ENCODE measurements at regions of chr17 and their contacts with region 1.

Region 1: GRCh38 chr17:59634632-59635541 is 15.2 kb downstream of the CLTC start:
- DNase-seq: no peak
- H3K4me3 ChIP-seq: no peak overlapping the region
- H3K27ac ChIP-seq: no peak overlapping the region
- H3K27me3 ChIP-seq: no peaks in the 10 kb centered on the region
- CTCF ChIP-seq: no peak

Region 2: DNA sequence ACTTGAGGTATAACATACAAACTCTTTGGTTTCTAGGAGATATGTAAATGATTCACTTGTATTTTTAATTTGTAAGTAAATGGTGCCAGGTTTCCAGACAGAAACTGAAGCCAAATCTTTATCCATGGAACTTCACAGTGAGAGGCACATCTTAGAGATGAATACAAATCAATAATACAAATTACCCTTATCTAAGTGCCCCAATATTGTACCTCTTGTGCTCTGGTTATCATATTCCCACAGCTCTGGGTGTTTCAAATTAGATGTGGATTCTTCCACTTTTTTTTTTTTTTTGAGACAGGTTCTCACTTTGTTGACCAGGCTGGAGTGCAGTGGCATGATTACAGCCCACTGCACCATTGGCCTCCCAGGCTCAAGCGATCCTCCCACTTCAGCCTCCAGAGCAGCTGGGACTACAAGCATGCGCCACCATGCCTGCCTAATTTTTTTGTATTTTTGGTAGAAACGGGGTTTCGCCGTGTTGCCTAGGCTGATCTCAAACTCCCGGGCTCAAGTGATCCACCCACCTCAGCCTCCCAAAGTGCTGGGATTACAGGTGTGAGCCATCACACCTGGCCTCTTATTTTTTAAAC is 107.5 kb before region 1 on chr17:
- CTCF ChIA-PET with region 1: no interaction called
- POLR2A ChIA-PET with region 1: no interaction called
- DNase-seq: no peak
- H3K4me3 ChIP-seq: no peak overlapping the region
- H3K27ac ChIP-seq: no peak overlapping the region
- H3K27me3 ChIP-seq: peaks cover 13% of the 10 kb centered on the region
- CTCF ChIP-seq: no peak

Region 3: GRCh38 chr17:59565171-59565969 is 69.5 kb before region 1 on chr17 and contains the start of gene DHX40:
- CTCF ChIA-PET with region 1: no interaction called
- POLR2A ChIA-PET with region 1: no interaction called
- DNase-seq: peak; percentile 85
- H3K4me3 ChIP-seq: peak within 1 kb of the TSS; percentile 100
- H3K27ac ChIP-seq: peak within 1 kb of the TSS; percentile 72
- H3K27me3 ChIP-seq: no peaks in the 10 kb centered on the region
- CTCF ChIP-seq: no peak
- polyA plus RNA-seq, gene DHX40: 37.4 and 49.4 TPM in 2 replicates

Region 4: GRCh38 chr17:59734226-59734625 is 99.3 kb after region 1 on chr17:
- CTCF ChIA-PET with region 1: no interaction called
- POLR2A ChIA-PET with region 1: interaction called, 13 read pairs
- DNase-seq: no peak
- H3K4me3 ChIP-seq: no peak overlapping the region
- H3K27ac ChIP-seq: no peak overlapping the region
- H3K27me3 ChIP-seq: no peaks in the 10 kb centered on the region
- CTCF ChIP-seq: no peak

Measured in AG04450 (cell line).